CD8-positive, alpha-beta T cell (primary cell): ENCODE measurements at regions of chr19 and their contacts with region 1.

Region 1: GRCh38 chr19:33176670-33177416 is 17.3 kb upstream of the LRP3 start:
- DNase-seq: peak; percentile 91 to 100 (median 97)
- ATAC-seq: peak; percentile 74
- H3K4me3 ChIP-seq: peak overlapping the region; percentile 78 to 89
- H3K4me3 Mint-ChIP-seq: peak overlapping the region; percentile 95
- H3K27ac ChIP-seq: peak overlapping the region; percentile 83
- H3K27ac Mint-ChIP-seq: peak overlapping the region; percentile 98
- H3K4me1 ChIP-seq: peaks cover 16% of the 10 kb centered on the region
- H3K4me1 Mint-ChIP-seq: peaks cover 37% of the 10 kb centered on the region
- H3K27me3 ChIP-seq: no peaks in the 10 kb centered on the region
- H3K27me3 Mint-ChIP-seq: no peaks in the 10 kb centered on the region
- CTCF ChIP-seq: no peak

Region 2: GRCh38 chr19:32580901-32581703 is 595.7 kb before region 1 on chr19 and contains the start of gene PDCD5:
- CTCF ChIA-PET with region 1: no interaction called
- POLR2A ChIA-PET with region 1: interaction called, 3 read pairs
- intact Hi-C with region 1: loop called (anchors 2 kb)
- DNase-seq: peak; percentile 96 to 98 (median 97)
- ATAC-seq: peak; percentile 93
- H3K4me3 ChIP-seq: peak within 1 kb of the TSS; percentile 66 to 87
- H3K4me3 Mint-ChIP-seq: peak within 1 kb of the TSS; percentile 95
- H3K27ac ChIP-seq: peak within 1 kb of the TSS; percentile 57 to 70
- H3K27ac Mint-ChIP-seq: peak within 1 kb of the TSS; percentile 93
- H3K4me1 ChIP-seq: peaks cover 21% of the 10 kb centered on the region
- H3K4me1 Mint-ChIP-seq: peaks cover 35% of the 10 kb centered on the region
- H3K27me3 ChIP-seq: peaks cover 0 to 3% of the 10 kb centered on the region in 2 experiments
- H3K27me3 Mint-ChIP-seq: no peaks in the 10 kb centered on the region
- CTCF ChIP-seq: no peak
- total RNA-seq, gene PDCD5: 24.9 to 26.6 TPM

Region 3: DNA sequence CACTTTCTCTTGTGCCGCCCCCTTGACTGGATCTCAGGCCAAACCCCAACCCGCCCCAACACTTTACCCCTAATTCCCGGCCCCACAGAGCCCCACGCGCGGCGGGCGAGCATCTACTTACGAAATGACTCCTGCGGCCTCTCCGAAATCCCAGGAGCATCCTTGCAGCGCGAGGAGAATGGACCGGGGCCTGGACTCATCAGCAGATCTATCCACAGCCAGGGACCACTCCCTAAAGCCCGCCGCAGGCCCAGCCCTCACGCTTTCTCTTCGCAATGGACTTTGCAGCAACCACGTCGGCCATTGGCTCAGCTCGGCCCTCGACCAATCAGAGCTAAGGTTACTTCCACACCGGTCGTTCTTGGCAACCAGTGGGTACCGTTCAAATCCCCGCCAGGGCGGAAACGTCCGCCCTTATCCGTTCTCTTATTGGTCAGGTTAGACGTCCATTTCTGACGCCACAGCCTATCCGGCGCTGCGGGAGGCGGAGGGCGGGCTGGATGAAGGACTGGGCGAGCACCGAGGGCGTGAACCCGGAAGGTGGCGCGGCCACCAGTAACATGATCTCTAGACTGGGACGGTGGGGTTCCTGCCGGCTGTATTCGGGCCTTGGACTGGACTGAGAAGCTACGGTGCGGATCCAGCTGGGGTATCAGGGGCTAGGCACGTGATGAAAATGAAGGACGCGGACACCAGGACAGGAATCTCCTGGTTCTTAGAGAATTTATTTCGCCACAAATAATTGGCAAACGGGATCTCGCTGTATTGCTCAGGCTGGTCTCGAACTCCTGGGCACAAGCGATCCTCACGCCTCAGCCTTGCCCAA is 204.9 kb before region 1 on chr19 and contains the starts of genes CEP89 and FAAP24:
- CTCF ChIA-PET with region 1: no interaction called
- POLR2A ChIA-PET with region 1: no interaction called
- intact Hi-C with region 1: loop called (anchors 1 kb)
- DNase-seq: peak; percentile 96 to 99 (median 98)
- ATAC-seq: peak; percentile 98
- H3K4me3 ChIP-seq: peak within 1 kb of the TSS; percentile 87 to 90
- H3K4me3 Mint-ChIP-seq: peak within 1 kb of the TSS; percentile 99
- H3K27ac ChIP-seq: peak within 1 kb of the TSS; percentile 68 to 93
- H3K27ac Mint-ChIP-seq: peak within 1 kb of the TSS; percentile 98
- H3K4me1 ChIP-seq: peaks cover 10% of the 10 kb centered on the region
- H3K4me1 Mint-ChIP-seq: peaks cover 24% of the 10 kb centered on the region
- H3K27me3 ChIP-seq: no peaks in the 10 kb centered on the region
- H3K27me3 Mint-ChIP-seq: no peaks in the 10 kb centered on the region
- CTCF ChIP-seq: no peak
- total RNA-seq, gene CEP89: 3.0 to 5.5 TPM
- total RNA-seq, gene FAAP24: 0.69 to 1.2 TPM

Region 4: GRCh38 chr19:33143897-33144405 is 32.9 kb before region 1 on chr19:
- CTCF ChIA-PET with region 1: interaction called, 16 read pairs
- POLR2A ChIA-PET with region 1: interaction called, 5 read pairs
- intact Hi-C with region 1: loop called in 1 of 2 experiments (anchors 2 kb)
- DNase-seq: peak; percentile 17 to 80 (median 60)
- ATAC-seq: peak; percentile 99
- H3K4me3 ChIP-seq: no peak overlapping the region
- H3K4me3 Mint-ChIP-seq: no peak overlapping the region
- H3K27ac ChIP-seq: no peak overlapping the region
- H3K27ac Mint-ChIP-seq: no peak overlapping the region
- H3K4me1 ChIP-seq: peaks cover 3% of the 10 kb centered on the region
- H3K4me1 Mint-ChIP-seq: peaks cover 4% of the 10 kb centered on the region
- H3K27me3 ChIP-seq: peaks cover 0 to 3% of the 10 kb centered on the region in 2 experiments
- H3K27me3 Mint-ChIP-seq: peaks cover 2% of the 10 kb centered on the region
- CTCF ChIP-seq: peak; percentile 91

Region 5: GRCh38 chr19:33406521-33407139 is 229.8 kb after region 1 on chr19:
- CTCF ChIA-PET with region 1: interaction called, 3 read pairs
- POLR2A ChIA-PET with region 1: no interaction called
- intact Hi-C with region 1: loop called in 1 of 2 experiments (anchors 1 kb)
- DNase-seq: peak; percentile 54 to 86 (median 74)
- ATAC-seq: peak; percentile 80
- H3K4me3 ChIP-seq: no peak overlapping the region
- H3K4me3 Mint-ChIP-seq: no peak overlapping the region
- H3K27ac ChIP-seq: no peak overlapping the region
- H3K27ac Mint-ChIP-seq: no peak overlapping the region
- H3K4me1 ChIP-seq: no peaks in the 10 kb centered on the region
- H3K4me1 Mint-ChIP-seq: no peaks in the 10 kb centered on the region
- H3K27me3 ChIP-seq: no peaks in the 10 kb centered on the region
- H3K27me3 Mint-ChIP-seq: no peaks in the 10 kb centered on the region
- CTCF ChIP-seq: peak; percentile 86

Region 6: GRCh38 chr19:34428549-34429285 is 1251.9 kb after region 1 on chr19:
- CTCF ChIA-PET with region 1: no interaction called
- POLR2A ChIA-PET with region 1: no interaction called
- intact Hi-C with region 1: loop called in 1 of 2 experiments (anchors 2 kb)
- DNase-seq: peak in 5 of 9 experiments; percentile 24 to 61 (median 35)
- ATAC-seq: peak; percentile 43
- H3K4me3 ChIP-seq: peak overlapping the region; percentile 58 to 84
- H3K4me3 Mint-ChIP-seq: peak overlapping the region; percentile 99
- H3K27ac ChIP-seq: peak overlapping the region; percentile 76 to 82
- H3K27ac Mint-ChIP-seq: peak overlapping the region; percentile 96
- H3K4me1 ChIP-seq: peaks cover 29% of the 10 kb centered on the region
- H3K4me1 Mint-ChIP-seq: peaks cover 41% of the 10 kb centered on the region
- H3K27me3 ChIP-seq: no peaks in the 10 kb centered on the region
- H3K27me3 Mint-ChIP-seq: no peaks in the 10 kb centered on the region
- CTCF ChIP-seq: no peak